ENCODE measurements at regions of chr11 and their contacts with region 1.

Region 1: GRCh38 chr11:47152953-47153950 is 23.4 kb downstream of the ARFGAP2 start:
- DNase-seq: peak; percentile 66 to 88
- H3K4me3 ChIP-seq: no peak overlapping the region
- H3K4me1 ChIP-seq: no peaks in the 10 kb centered on the region
- H3K27me3 ChIP-seq: no peaks in the 10 kb centered on the region

Region 2: GRCh38 chr11:46367244-46367915 is 785.9 kb before region 1 on chr11:
- in situ Hi-C with region 1: no loop called
- DNase-seq: peak in 1 of 2 experiments; percentile 81
- H3K4me3 ChIP-seq: no peak overlapping the region
- H3K4me1 ChIP-seq: 0 out of 2 replicates have a peak, but pooled peaks cover 3% of the 10 kb centered on the region
- H3K27me3 ChIP-seq: no peaks in the 10 kb centered on the region

Region 3: GRCh38 chr11:46916286-46917108 is 236.8 kb before region 1 on chr11:
- in situ Hi-C with region 1: loop called (anchors 10 kb)
- DNase-seq: peak; percentile 67 to 77
- H3K4me3 ChIP-seq: peak overlapping the region; percentile 72
- H3K4me1 ChIP-seq: peaks cover 23% of the 10 kb centered on the region
- H3K27me3 ChIP-seq: no peaks in the 10 kb centered on the region

Region 4: GRCh38 chr11:46966773-46967172 is 186.5 kb before region 1 on chr11:
- in situ Hi-C with region 1: no loop called
- DNase-seq: no peak
- H3K4me3 ChIP-seq: no peak overlapping the region
- H3K4me1 ChIP-seq: no peaks in the 10 kb centered on the region
- H3K27me3 ChIP-seq: no peaks in the 10 kb centered on the region

Measured in HAP-1 (cell line).